Naive thymus-derived CD8-positive, alpha-beta T cell (primary cell): ENCODE measurements at regions of chr5 and their contacts with region 1.

Region 1: GRCh38 chr5:139633295-139634027 is 14.7 kb upstream of the CXXC5 start:
- DNase-seq: peak; percentile 39 to 76 (median 61)
- ATAC-seq: peak; percentile 30 to 41
- H3K4me3 Mint-ChIP-seq: no peak overlapping the region
- H3K27ac Mint-ChIP-seq: peak overlapping the region in 9 of 10 donors; percentile 20 to 83 (median 45)
- H3K4me1 Mint-ChIP-seq: peaks cover 26 to 50% (median 45%) of the 10 kb centered on the region in 4 donors
- H3K27me3 Mint-ChIP-seq: no peaks in the 10 kb centered on the region

Region 2: GRCh38 chr5:139574641-139575312 is 58.7 kb before region 1 on chr5:
- POLR2A ChIA-PET with region 1: interaction called, 12 read pairs
- DNase-seq: peak in 6 of 10 donors; percentile 14 to 62 (median 44)
- ATAC-seq: peak; percentile 39 to 58
- H3K4me3 Mint-ChIP-seq: peak overlapping the region in 9 of 10 donors; percentile 23 to 75 (median 65)
- H3K27ac Mint-ChIP-seq: peak overlapping the region in 9 of 10 donors; percentile 52 to 93 (median 87)
- H3K4me1 Mint-ChIP-seq: peaks cover 33 to 87% (median 78%) of the 10 kb centered on the region in 4 donors
- H3K27me3 Mint-ChIP-seq: no peaks in the 10 kb centered on the region

Region 3: GRCh38 chr5:139600336-139600949 is 33.0 kb before region 1 on chr5:
- POLR2A ChIA-PET with region 1: no interaction called
- DNase-seq: no peak
- ATAC-seq: no peak
- H3K4me3 Mint-ChIP-seq: no peak overlapping the region
- H3K27ac Mint-ChIP-seq: peak overlapping the region in 6 of 10 donors; percentile 4 to 62 (median 25)
- H3K4me1 Mint-ChIP-seq: peaks cover 9 to 37% (median 24%) of the 10 kb centered on the region in 4 donors
- H3K27me3 Mint-ChIP-seq: no peaks in the 10 kb centered on the region

Region 4: GRCh38 chr5:139670369-139671095 is 37.1 kb after region 1 on chr5:
- POLR2A ChIA-PET with region 1: interaction called, 18 read pairs
- DNase-seq: peak in 4 of 10 donors; percentile 15 to 68 (median 40)
- ATAC-seq: peak; percentile 47 to 51
- H3K4me3 Mint-ChIP-seq: peak overlapping the region; percentile 67 to 89 (median 84)
- H3K27ac Mint-ChIP-seq: peak overlapping the region; percentile 36 to 93 (median 80)
- H3K4me1 Mint-ChIP-seq: peaks cover 18 to 73% (median 51%) of the 10 kb centered on the region in 4 donors
- H3K27me3 Mint-ChIP-seq: no peaks in the 10 kb centered on the region

Region 5: DNA sequence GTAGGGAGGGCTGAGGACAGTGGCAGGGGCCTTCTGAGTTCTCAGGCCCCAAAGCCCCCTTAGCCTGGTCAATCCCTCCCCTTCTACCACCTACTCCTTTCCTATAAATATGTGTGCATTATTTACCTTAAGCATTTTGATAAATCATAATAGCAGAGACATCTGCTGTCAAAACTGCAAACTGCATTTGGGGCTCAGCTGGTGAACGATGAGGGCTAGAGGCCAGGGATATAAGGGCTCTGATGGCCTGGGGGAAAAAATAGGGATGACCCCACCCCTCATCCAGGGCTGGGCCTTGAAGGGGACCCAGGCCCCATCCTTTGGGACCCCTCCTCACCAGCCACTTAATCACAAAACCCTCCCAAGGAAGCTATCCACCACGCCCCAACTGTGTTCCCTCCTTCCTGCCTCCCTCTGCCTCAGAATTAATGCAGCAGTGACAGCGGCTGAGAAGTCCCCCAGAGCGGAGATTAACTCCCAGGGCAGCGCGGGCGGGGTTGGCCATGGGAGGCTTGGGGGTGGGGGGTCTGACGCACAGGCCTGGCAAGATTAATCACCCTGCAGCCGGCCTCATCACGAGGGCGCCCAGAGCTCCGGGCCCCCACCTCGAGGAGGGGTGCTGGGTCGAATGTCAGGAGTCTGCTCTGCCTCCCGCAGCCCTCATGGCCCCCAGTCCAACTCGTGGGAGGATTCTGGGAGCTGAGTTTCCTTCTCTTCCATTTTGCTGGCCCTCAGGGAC is 56.8 kb after region 1 on chr5:
- POLR2A ChIA-PET with region 1: interaction called, 41 read pairs
- DNase-seq: no peak
- ATAC-seq: peak; percentile 42
- H3K4me3 Mint-ChIP-seq: no peak overlapping the region
- H3K27ac Mint-ChIP-seq: peak overlapping the region in 3 of 10 donors; percentile 16 to 29 (median 24)
- H3K4me1 Mint-ChIP-seq: peaks cover 7 to 34% (median 15%) of the 10 kb centered on the region in 4 donors
- H3K27me3 Mint-ChIP-seq: no peaks in the 10 kb centered on the region

Region 6: GRCh38 chr5:139725073-139725830 is 91.8 kb after region 1 on chr5:
- POLR2A ChIA-PET with region 1: no interaction called
- DNase-seq: no peak
- ATAC-seq: no peak
- H3K4me3 Mint-ChIP-seq: no peak overlapping the region
- H3K27ac Mint-ChIP-seq: peak overlapping the region in 1 of 10 donors; percentile 16
- H3K4me1 Mint-ChIP-seq: peaks cover 0 to 2% (median under 1%) of the 10 kb centered on the region in 4 donors
- H3K27me3 Mint-ChIP-seq: no peaks in the 10 kb centered on the region